Kidney (tissue), 22 donors: ENCODE measurements at regions of chr2 and their contacts with region 1.

Region 1: DNA sequence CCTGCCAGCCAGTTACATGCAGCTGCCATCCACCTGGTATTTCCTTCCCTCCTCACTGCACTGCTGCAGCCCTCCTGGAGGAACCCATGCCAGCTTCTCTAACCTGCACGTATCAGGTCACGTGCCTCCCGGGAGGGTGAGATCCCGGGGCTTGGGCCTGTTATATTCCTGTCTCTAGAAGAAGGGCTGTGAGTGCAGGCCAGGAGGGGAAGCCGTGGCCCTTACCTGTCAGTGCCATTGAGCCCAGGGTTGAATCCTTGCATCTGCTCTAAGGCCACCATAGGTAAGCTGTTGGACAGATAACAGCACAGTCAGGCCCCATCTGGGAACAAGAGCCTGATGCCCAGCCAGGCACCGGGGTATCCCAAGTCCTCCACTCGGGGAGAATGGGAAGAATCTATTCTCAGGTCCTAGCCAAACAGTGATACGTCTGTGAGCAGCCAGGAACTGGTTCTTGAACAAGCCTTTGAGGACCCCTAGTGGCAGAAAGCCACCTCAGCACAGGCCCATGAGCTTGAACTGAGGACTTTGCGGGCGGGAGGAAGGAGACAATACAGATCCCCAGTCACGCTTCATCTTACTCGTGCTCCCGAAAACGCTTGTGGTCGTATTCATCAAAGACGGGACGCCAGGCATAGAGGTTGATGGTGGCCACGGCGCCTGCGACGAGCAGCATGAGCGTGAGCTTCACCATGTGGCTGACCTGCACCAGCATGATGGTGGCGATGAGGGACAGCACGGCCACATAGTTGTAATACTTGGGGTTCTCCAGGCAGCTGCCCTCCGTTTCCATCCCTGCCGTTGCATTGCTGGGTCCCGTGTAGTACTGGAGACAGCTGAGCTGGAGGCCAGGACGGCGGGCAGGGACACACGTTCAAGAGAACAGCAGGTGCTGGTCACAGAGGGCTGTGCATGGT is 34.4 kb downstream of the CENPO start:
- DNase-seq: peak in 4 of 5 donors; percentile 86 to 94 (median 90)
- H3K4me3 ChIP-seq: no peak overlapping the region
- H3K27ac ChIP-seq: no peak overlapping the region
- H3K4me1 ChIP-seq: peaks cover 0 to 6% (median 5%) of the 10 kb centered on the region in 3 donors
- H3K27me3 ChIP-seq: no peaks in the 10 kb centered on the region
- CTCF ChIP-seq: peak; percentile 96

Region 2: DNA sequence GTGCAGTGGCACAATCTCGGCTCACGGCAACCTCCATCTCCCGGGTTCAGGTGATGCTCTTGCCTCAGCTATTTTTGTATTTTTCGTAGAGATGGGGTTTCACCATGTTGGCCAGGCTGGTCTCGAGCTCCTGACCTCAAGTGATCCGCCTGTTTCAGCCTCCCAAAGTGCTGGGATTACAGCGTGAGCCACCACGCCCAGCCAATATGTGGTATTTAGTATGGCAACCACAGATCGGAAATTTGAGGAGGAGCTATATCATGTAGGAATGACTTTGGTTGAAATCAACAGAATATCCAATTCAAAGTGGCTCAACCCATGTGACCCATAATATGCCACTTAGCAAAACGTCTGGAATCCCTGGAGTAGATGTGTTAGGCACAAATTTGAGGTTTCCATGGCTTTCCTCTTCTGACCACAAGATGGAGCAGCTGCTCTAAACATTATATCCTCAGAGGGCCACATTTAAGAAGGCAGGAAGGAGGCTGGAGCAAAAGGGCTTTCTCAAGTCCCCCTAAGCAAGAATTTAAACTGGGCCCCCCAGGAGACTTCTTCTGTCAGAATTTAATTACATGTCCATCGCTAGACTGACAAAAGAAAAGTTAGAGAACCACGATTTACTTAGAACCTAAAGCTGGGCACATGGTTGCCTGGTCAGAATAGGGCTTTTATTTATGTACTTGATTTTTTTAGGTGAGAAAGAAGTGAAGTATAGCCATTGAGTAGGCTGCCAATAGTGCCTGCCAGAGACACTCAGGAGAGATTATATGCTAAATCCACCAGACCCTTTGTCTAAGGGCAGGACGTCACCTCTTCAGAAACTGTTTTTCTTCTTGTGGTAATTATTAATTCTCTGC is 417.7 kb before region 1 on chr2:
- intact Hi-C with region 1: loop called (anchors 5 kb)
- DNase-seq: peak in 3 of 5 donors; percentile 45 to 88 (median 81)
- H3K4me3 ChIP-seq: no peak overlapping the region
- H3K27ac ChIP-seq: no peak overlapping the region
- H3K4me1 ChIP-seq: no peaks in the 10 kb centered on the region
- H3K27me3 ChIP-seq: no peaks in the 10 kb centered on the region
- CTCF ChIP-seq: peak; percentile 83

Region 3: GRCh38 chr2:24482251-24482971 is 345.2 kb before region 1 on chr2:
- intact Hi-C with region 1: no loop called
- DNase-seq: no peak
- H3K4me3 ChIP-seq: no peak overlapping the region
- H3K27ac ChIP-seq: no peak overlapping the region
- H3K4me1 ChIP-seq: no peaks in the 10 kb centered on the region
- H3K27me3 ChIP-seq: no peaks in the 10 kb centered on the region
- CTCF ChIP-seq: no peak

Region 4: GRCh38 chr2:24559475-24560109 is 268.0 kb before region 1 on chr2:
- intact Hi-C with region 1: no loop called
- DNase-seq: no peak
- H3K4me3 ChIP-seq: no peak overlapping the region
- H3K27ac ChIP-seq: no peak overlapping the region
- H3K4me1 ChIP-seq: peaks cover 0 to 3% (median 0%) of the 10 kb centered on the region in 3 donors
- H3K27me3 ChIP-seq: no peaks in the 10 kb centered on the region
- CTCF ChIP-seq: no peak

Region 5: GRCh38 chr2:25453199-25453905 is 625.8 kb after region 1 on chr2:
- intact Hi-C with region 1: no loop called
- DNase-seq: no peak
- H3K4me3 ChIP-seq: no peak overlapping the region
- H3K27ac ChIP-seq: no peak overlapping the region
- H3K4me1 ChIP-seq: no peaks in the 10 kb centered on the region
- H3K27me3 ChIP-seq: no peaks in the 10 kb centered on the region
- CTCF ChIP-seq: no peak